ENCODE measurements at regions of chr9 and their contacts with region 1.

Region 1: GRCh38 chr9:15873569-15874177 is 320.8 kb downstream of the CCDC171 start:
- DNase-seq: no peak
- H3K4me3 Mint-ChIP-seq: no peak overlapping the region
- H3K27ac Mint-ChIP-seq: no peak overlapping the region
- H3K4me1 Mint-ChIP-seq: no peaks in the 10 kb centered on the region
- H3K27me3 Mint-ChIP-seq: peaks cover 3% of the 10 kb centered on the region

Region 2: GRCh38 chr9:15722888-15723287 is 150.8 kb before region 1 on chr9:
- intact Hi-C with region 1: no loop called
- DNase-seq: no peak
- H3K4me3 Mint-ChIP-seq: no peak overlapping the region
- H3K27ac Mint-ChIP-seq: no peak overlapping the region
- H3K4me1 Mint-ChIP-seq: no peaks in the 10 kb centered on the region
- H3K27me3 Mint-ChIP-seq: no peaks in the 10 kb centered on the region

Region 3: DNA sequence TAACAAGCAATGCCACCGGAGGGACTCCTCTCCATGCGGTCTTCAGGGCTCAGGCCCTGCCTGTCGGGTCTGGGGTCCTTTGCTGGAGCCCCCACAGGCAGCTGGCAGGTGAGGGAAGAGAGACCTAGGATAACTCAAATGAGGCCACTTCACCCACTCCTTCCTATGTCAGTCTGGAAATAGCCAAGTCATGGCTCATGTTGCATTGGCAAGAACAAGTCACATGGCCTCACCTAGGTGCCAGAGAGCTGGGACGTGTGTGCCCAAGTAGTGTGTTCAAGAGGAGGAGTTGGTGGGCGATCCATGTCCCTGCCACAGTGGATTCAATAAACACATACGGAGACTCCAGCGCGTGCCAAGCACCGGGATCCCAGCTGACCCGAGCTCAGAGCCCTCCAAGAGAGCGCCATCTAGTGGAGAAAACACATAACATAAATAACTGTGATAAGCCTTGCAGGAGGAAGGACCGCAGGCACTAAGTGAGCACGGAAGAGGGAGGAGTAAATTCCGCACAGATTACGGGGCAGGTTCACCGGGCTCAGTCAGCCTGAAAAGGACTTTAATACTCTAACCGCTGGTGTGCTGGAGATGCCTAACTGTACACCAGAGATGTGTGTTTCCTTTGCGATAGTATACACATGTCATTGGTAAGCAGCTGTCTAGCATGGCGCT is 260.0 kb after region 1 on chr9:
- intact Hi-C with region 1: loop called (anchors 1 kb)
- DNase-seq: no peak
- H3K4me3 Mint-ChIP-seq: no peak overlapping the region
- H3K27ac Mint-ChIP-seq: no peak overlapping the region
- H3K4me1 Mint-ChIP-seq: peaks cover 6% of the 10 kb centered on the region
- H3K27me3 Mint-ChIP-seq: no peaks in the 10 kb centered on the region